CD8-positive, alpha-beta memory T cell (primary cell): ENCODE measurements at regions of chr1 and their contacts with region 1.

Region 1: GRCh38 chr1:154627257-154628120 is 19.5 kb upstream of the ADAR start:
- DNase-seq: peak; percentile 77 to 92 (median 82)
- H3K4me3 ChIP-seq: peak overlapping the region; percentile 68
- H3K4me3 Mint-ChIP-seq: peak overlapping the region; percentile 89 to 99 (median 95)
- H3K27ac ChIP-seq: peak overlapping the region; percentile 92
- H3K27ac Mint-ChIP-seq: peak overlapping the region; percentile 97 to 100 (median 99)
- H3K4me1 ChIP-seq: peaks cover 21% of the 10 kb centered on the region
- H3K4me1 Mint-ChIP-seq: peaks cover 27 to 52% (median 45%) of the 10 kb centered on the region in 3 donors
- H3K27me3 ChIP-seq: no peaks in the 10 kb centered on the region
- H3K27me3 Mint-ChIP-seq: peaks cover 3 to 12% of the 10 kb centered on the region in 2 donors

Region 2: DNA sequence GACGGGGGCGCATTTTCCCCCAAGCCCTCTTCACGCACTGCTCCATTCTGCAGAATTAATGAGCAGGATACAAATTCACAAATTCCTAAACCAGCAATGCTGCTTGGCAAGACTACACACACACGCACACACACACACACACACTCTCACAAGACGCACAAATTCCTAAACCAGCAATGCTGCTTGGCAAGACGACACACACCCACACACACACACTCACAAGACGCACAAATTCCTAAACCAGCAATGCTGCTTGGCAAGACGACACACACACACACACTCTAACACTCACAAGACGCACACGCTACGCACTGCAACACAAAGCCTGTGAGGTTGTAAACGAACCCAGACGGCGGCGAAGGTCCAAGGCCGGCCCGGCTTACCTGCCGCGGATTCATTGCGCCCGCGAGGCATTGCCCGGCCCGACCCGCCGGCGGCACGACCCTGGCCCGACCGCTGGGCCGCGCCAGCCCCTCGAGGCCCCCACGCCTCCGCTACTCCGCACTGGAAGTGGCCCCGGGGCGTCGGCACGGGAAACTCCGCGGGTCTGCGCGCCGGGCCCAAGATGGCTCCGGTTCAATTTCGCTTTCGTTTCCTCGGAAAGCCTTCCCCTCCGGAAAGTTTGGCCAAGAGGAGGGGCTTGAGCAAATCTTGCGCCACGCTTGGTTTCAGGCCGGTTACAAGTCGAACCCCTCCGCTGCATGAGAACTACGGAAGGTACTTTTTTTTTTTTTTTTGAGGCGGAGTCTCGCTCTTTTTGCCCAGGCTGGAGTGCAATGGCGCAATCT is 19.7 kb before region 1 on chr1 and contains the start of gene ADAR:
- CTCF ChIA-PET with region 1: interaction called, 4 read pairs
- POLR2A ChIA-PET with region 1: interaction called, 26 read pairs
- DNase-seq: peak; percentile 80 to 94 (median 89)
- H3K4me3 ChIP-seq: peak within 1 kb of the TSS; percentile 98
- H3K4me3 Mint-ChIP-seq: peak within 1 kb of the TSS; percentile 96 to 100 (median 99)
- H3K27ac ChIP-seq: peak within 1 kb of the TSS; percentile 93
- H3K27ac Mint-ChIP-seq: peak within 1 kb of the TSS; percentile 97 to 100 (median 99)
- H3K4me1 ChIP-seq: peaks cover 62% of the 10 kb centered on the region
- H3K4me1 Mint-ChIP-seq: peaks cover 69 to 87% (median 84%) of the 10 kb centered on the region in 3 donors
- H3K27me3 ChIP-seq: no peaks in the 10 kb centered on the region
- H3K27me3 Mint-ChIP-seq: no peaks in the 10 kb centered on the region
- total RNA-seq, gene ADAR: 223 TPM